ENCODE measurements at regions of chr11 and their contacts with region 1.

Region 1: DNA sequence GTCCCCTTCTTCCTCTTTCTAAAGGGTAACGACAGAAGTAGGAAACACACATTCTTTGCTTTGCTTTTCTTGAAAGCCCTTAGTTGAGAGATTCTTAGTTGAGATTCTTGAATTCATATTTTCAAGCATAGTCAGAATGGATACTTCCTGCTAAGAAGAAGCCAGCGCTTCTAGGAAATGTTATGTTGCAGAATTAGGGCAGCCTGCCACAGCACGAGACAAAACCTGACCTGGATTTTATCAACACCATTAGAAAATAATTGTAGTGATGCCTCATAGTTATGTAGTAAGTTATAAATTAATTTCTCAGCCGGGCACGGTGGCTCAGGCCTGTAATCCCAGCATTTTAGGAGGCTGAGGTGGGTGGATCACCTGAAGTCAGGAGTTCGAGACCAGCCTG is 37.9 kb upstream of the NUP160 start:
- DNase-seq: peak; percentile 32 to 68
- H3K4me3 ChIP-seq: no peak overlapping the region
- H3K27ac ChIP-seq: no peak overlapping the region
- H3K4me1 ChIP-seq: no peaks in the 10 kb centered on the region
- H3K27me3 ChIP-seq: no peaks in the 10 kb centered on the region
- CTCF ChIP-seq: no peak

Region 2: GRCh38 chr11:47899801-47900200 is 13.7 kb after region 1 on chr11:
- CTCF ChIA-PET with region 1: interaction called, 11 read pairs
- POLR2A ChIA-PET with region 1: no interaction called
- intact Hi-C with region 1: no loop called
- DNase-seq: no peak
- H3K4me3 ChIP-seq: no peak overlapping the region
- H3K27ac ChIP-seq: no peak overlapping the region
- H3K4me1 ChIP-seq: no peaks in the 10 kb centered on the region
- H3K27me3 ChIP-seq: no peaks in the 10 kb centered on the region
- CTCF ChIP-seq: no peak

Measured in PC-9 (cell line).